Heart left ventricle (tissue), 16 donors: ENCODE measurements at regions of chr19 and their contacts with region 1.

Region 1: DNA sequence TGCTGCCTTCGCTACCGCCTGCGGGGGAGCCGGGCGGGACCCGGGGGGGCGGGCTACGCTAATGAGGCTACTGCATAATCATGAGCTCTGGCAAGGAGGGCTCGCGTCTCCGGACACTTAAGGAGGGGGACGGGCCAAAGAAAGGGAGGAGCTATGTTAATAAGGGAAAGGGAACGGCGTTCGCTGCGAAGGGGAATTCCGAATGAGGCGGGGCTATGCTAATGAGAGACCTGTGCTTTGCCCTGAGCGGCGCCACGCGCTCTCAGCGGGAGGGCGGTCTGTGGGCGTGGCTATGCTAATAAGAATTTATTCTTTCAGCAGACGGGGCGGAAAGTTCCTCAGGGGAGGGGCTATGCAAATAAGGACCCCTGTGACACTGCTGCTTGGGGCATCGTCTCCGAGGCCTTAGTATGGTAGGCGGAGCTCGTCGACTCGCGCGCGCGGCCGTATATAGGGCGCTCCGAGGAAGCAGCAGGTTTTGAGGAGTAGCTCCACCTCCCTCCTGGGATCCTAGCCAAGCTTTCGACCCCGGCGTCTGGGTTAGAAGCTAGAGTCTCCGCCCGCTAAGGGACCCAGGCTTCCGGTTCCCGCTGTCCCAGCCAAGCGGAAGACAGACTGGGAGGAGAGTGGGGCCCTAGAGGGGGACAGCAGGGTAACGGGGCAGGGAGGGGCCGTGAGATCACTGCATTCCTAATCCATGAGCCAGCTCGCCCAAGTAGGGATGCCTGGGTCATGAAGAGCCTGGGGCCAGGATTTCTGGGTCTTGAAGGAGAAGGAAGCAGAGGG is at the start of gene RRAS:
- DNase-seq: peak; percentile 99 to 100 (median 100)
- ATAC-seq: peak; percentile 75 to 81 (median 78)
- H3K4me3 ChIP-seq: peak within 1 kb of the TSS; percentile 77 to 100 (median 92)
- H3K27ac ChIP-seq: peak within 1 kb of the TSS; percentile 98 to 100 (median 100)
- H3K4me1 ChIP-seq: peaks cover 3 to 77% (median 53%) of the 10 kb centered on the region in 12 donors
- H3K27me3 ChIP-seq: no peaks in the 10 kb centered on the region
- CTCF ChIP-seq: no peak
- POLR2A ChIP-seq: peak; percentile 43 to 83
- total RNA-seq, gene RRAS: 64.4 to 149 (median 110) TPM

Region 2: DNA sequence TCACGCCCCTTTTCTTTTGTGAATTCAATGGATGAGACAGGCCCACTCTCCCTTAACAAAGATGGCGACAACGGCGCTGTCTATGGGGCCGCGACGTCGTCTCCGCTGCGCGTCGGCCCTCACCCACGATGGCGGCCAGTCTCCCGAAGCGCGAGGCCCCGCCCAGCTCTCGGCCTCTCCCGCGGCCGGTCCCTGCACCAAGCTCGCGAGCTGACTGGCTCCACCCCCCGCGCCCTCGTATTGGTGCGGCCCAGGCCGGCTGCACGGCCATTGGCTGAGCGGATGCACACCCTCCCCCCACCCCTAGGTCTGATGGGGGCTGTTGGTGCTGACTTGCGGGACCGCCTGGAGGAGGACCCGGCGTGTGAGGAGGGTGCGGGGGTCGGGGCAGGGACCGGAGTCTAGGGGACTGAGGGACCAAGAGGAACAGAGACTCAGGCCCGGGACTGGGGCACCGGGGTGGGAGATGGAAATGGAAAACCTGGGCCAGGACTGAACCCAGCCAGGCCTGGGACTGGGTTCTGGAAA is 1016.2 kb before region 1 on chr19:
- intact Hi-C with region 1: loop called in 1 of 10 experiments (anchors 10 kb)
- DNase-seq: peak; percentile 98 to 99 (median 99)
- ATAC-seq: peak; percentile 82 to 87 (median 84)
- H3K4me3 ChIP-seq: peak overlapping the region; percentile 33 to 64 (median 52)
- H3K27ac ChIP-seq: peak overlapping the region in 11 of 12 donors; percentile 61 to 92 (median 68)
- H3K4me1 ChIP-seq: peaks cover 0 to 54% (median 28%) of the 10 kb centered on the region in 12 donors
- H3K27me3 ChIP-seq: peaks cover 0 to 2% (median 0%) of the 10 kb centered on the region in 9 donors
- CTCF ChIP-seq: no peak
- POLR2A ChIP-seq: no peak

Region 3: GRCh38 chr19:49497047-49497788 is 143.1 kb before region 1 on chr19:
- intact Hi-C with region 1: loop called in 1 of 10 experiments (anchors 1 kb)
- DNase-seq: peak in 4 of 5 donors; percentile 63 to 76 (median 67)
- ATAC-seq: no peak
- H3K4me3 ChIP-seq: peak overlapping the region; percentile 80 to 98 (median 90)
- H3K27ac ChIP-seq: peak overlapping the region in 11 of 12 donors; percentile 89 to 99 (median 96)
- H3K4me1 ChIP-seq: peaks cover 14 to 56% (median 41%) of the 10 kb centered on the region in 12 donors
- H3K27me3 ChIP-seq: no peaks in the 10 kb centered on the region
- CTCF ChIP-seq: no peak
- POLR2A ChIP-seq: no peak

Region 4: GRCh38 chr19:49590071-49590970 is 50.0 kb before region 1 on chr19:
- intact Hi-C with region 1: loop called (anchors 1 to 5 kb)
- DNase-seq: peak; percentile 93 to 97 (median 97)
- ATAC-seq: peak; percentile 86 to 91 (median 89)
- H3K4me3 ChIP-seq: peak overlapping the region; percentile 68 to 96 (median 80)
- H3K27ac ChIP-seq: peak overlapping the region; percentile 82 to 99 (median 94)
- H3K4me1 ChIP-seq: peaks cover 5 to 35% (median 20%) of the 10 kb centered on the region in 12 donors
- H3K27me3 ChIP-seq: no peaks in the 10 kb centered on the region
- CTCF ChIP-seq: peak in 1 of 12 donors; percentile 10
- POLR2A ChIP-seq: peak in 1 of 2 donors; percentile 73

Region 5: GRCh38 chr19:49595819-49596404 is 44.4 kb before region 1 on chr19:
- intact Hi-C with region 1: loop called in 9 of 10 experiments (anchors 1 to 5 kb)
- DNase-seq: no peak
- ATAC-seq: no peak
- H3K4me3 ChIP-seq: no peak overlapping the region
- H3K27ac ChIP-seq: no peak overlapping the region
- H3K4me1 ChIP-seq: peaks cover 5 to 23% (median 20%) of the 10 kb centered on the region in 12 donors
- H3K27me3 ChIP-seq: no peaks in the 10 kb centered on the region
- CTCF ChIP-seq: no peak
- POLR2A ChIP-seq: no peak

Region 6: GRCh38 chr19:49665351-49666119 is 25.2 kb after region 1 on chr19 and contains the starts of genes BCL2L12 and IRF3:
- intact Hi-C with region 1: loop called in 1 of 10 experiments (anchors 1 kb)
- DNase-seq: peak; percentile 98 to 99 (median 98)
- ATAC-seq: peak; percentile 91 to 96 (median 92)
- H3K4me3 ChIP-seq: peak within 1 kb of the TSS; percentile 61 to 93 (median 76)
- H3K27ac ChIP-seq: peak within 1 kb of the TSS; percentile 63 to 95 (median 87)
- H3K4me1 ChIP-seq: peaks cover 0 to 33% (median 17%) of the 10 kb centered on the region in 12 donors
- H3K27me3 ChIP-seq: no peaks in the 10 kb centered on the region
- CTCF ChIP-seq: no peak
- POLR2A ChIP-seq: peak in 1 of 2 donors; percentile 76
- total RNA-seq, gene BCL2L12: 5.9 to 15.9 (median 10.0) TPM
- total RNA-seq, gene IRF3: 23.1 to 55.7 (median 30.5) TPM